HEK293 (cell line): ENCODE measurements at regions of chr1 and their contacts with region 1.

Region 1: GRCh38 chr1:36576118-36576517 is 93.4 kb upstream of the CSF3R start:
- H3K4me3 ChIP-seq: no peak overlapping the region
- H3K27ac ChIP-seq: no peak overlapping the region
- H3K4me1 ChIP-seq: no peaks in the 10 kb centered on the region
- CTCF ChIP-seq: peak; percentile 89

Region 2: GRCh38 chr1:36553591-36554322 is 22.4 kb before region 1 on chr1:
- CTCF ChIA-PET with region 1: interaction called, 33 read pairs
- POLR2A ChIA-PET with region 1: interaction called, 3 read pairs
- H3K4me3 ChIP-seq: no peak overlapping the region
- H3K27ac ChIP-seq: no peak overlapping the region
- H3K4me1 ChIP-seq: no peaks in the 10 kb centered on the region
- CTCF ChIP-seq: peak; percentile 91

Region 3: DNA sequence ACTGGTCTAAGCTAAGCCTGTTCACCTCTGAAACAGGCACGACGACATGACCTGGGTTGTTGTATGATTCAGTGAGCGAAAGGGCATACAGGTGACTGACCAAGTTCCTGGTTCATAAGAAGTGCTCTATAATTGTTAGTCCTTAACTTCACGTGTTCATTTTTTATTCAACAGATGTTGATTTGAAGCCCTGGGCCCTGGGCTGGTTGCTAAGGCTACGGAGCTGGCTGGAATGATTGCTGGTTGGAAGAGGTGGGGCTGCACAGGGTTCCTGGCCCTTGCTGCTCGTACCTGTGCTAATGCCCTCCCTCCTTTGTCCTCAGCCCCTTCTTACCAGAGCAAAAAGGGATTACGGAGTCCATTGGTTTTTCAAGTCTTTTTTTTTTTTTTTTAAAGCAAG is 17.9 kb after region 1 on chr1:
- CTCF ChIA-PET with region 1: interaction called, 18 read pairs
- POLR2A ChIA-PET with region 1: no interaction called
- H3K4me3 ChIP-seq: no peak overlapping the region
- H3K27ac ChIP-seq: no peak overlapping the region
- H3K4me1 ChIP-seq: no peaks in the 10 kb centered on the region
- CTCF ChIP-seq: no peak

Region 4: GRCh38 chr1:36625935-36626310 is 49.8 kb after region 1 on chr1:
- CTCF ChIA-PET with region 1: no interaction called
- POLR2A ChIA-PET with region 1: no interaction called
- H3K4me3 ChIP-seq: no peak overlapping the region
- H3K27ac ChIP-seq: no peak overlapping the region
- H3K4me1 ChIP-seq: no peaks in the 10 kb centered on the region
- CTCF ChIP-seq: no peak

Region 5: GRCh38 chr1:37085397-37085796 is 509.3 kb after region 1 on chr1:
- CTCF ChIA-PET with region 1: interaction called, 18 read pairs
- POLR2A ChIA-PET with region 1: no interaction called
- H3K4me3 ChIP-seq: no peak overlapping the region
- H3K27ac ChIP-seq: no peak overlapping the region
- H3K4me1 ChIP-seq: no peaks in the 10 kb centered on the region
- CTCF ChIP-seq: no peak